ENCODE measurements at regions of chr7 and their contacts with region 1.

Region 1: DNA sequence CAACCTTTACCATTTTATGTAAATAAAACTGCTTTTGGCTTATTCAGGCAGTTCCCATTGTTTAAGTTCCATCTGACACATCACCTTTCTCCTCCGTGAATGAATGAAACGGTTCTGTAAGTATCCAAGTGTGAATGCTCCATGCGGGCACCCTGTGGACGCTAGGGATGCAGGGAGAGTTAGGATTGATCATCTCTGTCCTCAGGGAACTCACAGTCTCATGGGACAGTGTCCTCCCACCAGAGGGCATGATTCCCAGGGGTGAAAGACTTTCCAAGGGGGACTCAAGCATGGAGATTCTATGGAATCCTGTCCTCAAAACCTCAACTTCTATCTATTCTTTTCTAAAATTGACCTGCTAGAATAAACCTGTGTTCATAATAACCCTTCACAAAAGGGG is 98.8 kb downstream of the HECW1 start:
- DNase-seq: no peak
- ATAC-seq: peak; percentile 71
- H3K4me3 ChIP-seq: no peak overlapping the region
- H3K27ac ChIP-seq: no peak overlapping the region
- H3K4me1 ChIP-seq: peaks cover 0 to 6% of the 10 kb centered on the region in 2 experiments; a peak in 1 of 4 replicates
- H3K27me3 ChIP-seq: no peaks in the 10 kb centered on the region
- CTCF ChIP-seq: peak; percentile 41 to 45 (median 45); a peak in 5 of 6 replicates
- POLR2A ChIP-seq: no peak
- RAD21 ChIP-seq: peak; percentile 33

Region 2: GRCh38 chr7:43337191-43337590 is 125.9 kb after region 1 on chr7:
- CTCF ChIA-PET with region 1: no interaction called
- POLR2A ChIA-PET with region 1: no interaction called
- RAD21 ChIA-PET with region 1: no interaction called
- intact Hi-C with region 1: no loop called
- DNase-seq: no peak
- ATAC-seq: no peak
- H3K4me3 ChIP-seq: no peak overlapping the region
- H3K27ac ChIP-seq: no peak overlapping the region
- H3K4me1 ChIP-seq: no peaks in the 10 kb centered on the region
- H3K27me3 ChIP-seq: no peaks in the 10 kb centered on the region
- CTCF ChIP-seq: no peak
- POLR2A ChIP-seq: no peak
- RAD21 ChIP-seq: no peak

Region 3: DNA sequence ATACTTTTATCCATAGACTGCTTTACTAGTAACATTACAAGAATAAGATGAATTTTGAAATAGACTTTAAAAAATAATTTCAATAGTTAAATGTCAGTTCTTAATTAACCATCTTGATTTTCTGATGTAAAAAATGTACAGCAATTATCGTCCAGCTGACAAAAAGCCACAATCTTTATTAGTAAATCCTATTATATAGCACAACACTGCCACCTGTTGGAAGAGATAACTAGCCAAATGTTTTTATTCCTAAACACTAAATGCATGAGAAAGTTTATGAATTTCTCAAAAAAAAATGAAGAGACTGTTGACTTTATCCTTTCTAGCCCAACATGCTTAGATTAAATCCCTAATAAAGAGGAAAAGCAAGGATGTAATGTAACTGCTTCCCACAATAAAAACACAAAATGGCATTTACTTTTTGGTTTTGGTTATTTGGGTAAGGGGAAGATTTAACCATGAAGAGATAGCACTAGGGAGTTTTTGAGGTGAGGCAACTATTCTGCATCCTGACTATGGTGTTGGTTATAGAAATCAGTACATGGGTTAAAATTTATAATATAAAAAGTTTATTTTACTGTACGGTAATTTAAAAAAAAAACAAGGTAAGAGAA is 510.0 kb after region 1 on chr7:
- CTCF ChIA-PET with region 1: interaction called, 4 read pairs
- POLR2A ChIA-PET with region 1: no interaction called
- RAD21 ChIA-PET with region 1: no interaction called
- intact Hi-C with region 1: loop called (anchors 5 kb)
- DNase-seq: no peak
- ATAC-seq: no peak
- H3K4me3 ChIP-seq: no peak overlapping the region
- H3K27ac ChIP-seq: no peak overlapping the region
- H3K4me1 ChIP-seq: no peaks in the 10 kb centered on the region
- H3K27me3 ChIP-seq: no peaks in the 10 kb centered on the region
- CTCF ChIP-seq: peak; percentile 39 to 79 (median 78); a peak in 5 of 6 replicates
- POLR2A ChIP-seq: no peak
- RAD21 ChIP-seq: peak; percentile 63